Endothelial cell of umbilical vein (primary cell): ENCODE measurements at regions of chr1 and their contacts with region 1.

Region 1: DNA sequence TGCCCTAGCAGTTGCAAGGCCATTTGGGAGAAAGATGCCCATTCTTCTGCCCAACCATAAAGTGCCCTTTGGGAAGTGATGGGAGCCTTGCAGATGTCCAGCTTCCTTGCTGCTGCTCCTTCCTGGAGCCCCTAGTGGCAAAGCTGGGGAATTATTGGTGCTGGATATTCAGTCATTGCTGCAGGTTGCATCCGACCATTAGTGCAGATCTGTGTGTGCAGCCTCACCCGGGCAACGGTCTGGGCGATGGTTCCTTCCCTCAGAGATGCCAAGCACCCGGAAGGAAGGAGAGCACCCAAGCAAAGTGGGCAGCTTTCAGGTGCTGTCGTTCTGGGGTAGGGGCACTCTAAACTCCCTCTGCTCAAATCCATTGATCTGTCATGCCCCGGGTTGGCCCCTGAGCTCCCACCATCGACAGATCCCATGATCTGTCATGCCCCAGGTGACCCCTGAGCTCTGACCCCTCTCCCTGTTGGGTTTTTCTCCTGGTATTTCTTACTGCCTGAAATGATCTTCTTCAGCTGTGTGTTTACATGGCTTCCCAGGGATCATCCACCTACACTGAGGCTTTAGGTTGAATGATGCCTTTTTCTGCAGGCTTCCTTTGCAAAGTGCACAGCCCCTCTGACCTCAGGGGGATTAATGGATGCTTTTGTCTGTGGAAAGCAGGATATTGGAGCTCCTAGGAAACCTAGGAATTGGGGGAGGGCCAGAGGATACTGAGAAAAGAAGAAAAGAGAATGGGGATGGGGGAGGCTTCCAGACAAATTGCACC is 467.5 kb downstream of the PTPRU start:
- DNase-seq: peak; percentile 39
- H3K4me3 ChIP-seq: no peak overlapping the region
- H3K27ac ChIP-seq: no peak overlapping the region
- H3K4me1 ChIP-seq: peaks cover 11% of the 10 kb centered on the region
- H3K27me3 ChIP-seq: peaks cover 10 to 16% of the 10 kb centered on the region in 2 experiments
- CTCF ChIP-seq: peak; percentile 68 to 75
- POLR2A ChIP-seq: no peak

Region 2: DNA sequence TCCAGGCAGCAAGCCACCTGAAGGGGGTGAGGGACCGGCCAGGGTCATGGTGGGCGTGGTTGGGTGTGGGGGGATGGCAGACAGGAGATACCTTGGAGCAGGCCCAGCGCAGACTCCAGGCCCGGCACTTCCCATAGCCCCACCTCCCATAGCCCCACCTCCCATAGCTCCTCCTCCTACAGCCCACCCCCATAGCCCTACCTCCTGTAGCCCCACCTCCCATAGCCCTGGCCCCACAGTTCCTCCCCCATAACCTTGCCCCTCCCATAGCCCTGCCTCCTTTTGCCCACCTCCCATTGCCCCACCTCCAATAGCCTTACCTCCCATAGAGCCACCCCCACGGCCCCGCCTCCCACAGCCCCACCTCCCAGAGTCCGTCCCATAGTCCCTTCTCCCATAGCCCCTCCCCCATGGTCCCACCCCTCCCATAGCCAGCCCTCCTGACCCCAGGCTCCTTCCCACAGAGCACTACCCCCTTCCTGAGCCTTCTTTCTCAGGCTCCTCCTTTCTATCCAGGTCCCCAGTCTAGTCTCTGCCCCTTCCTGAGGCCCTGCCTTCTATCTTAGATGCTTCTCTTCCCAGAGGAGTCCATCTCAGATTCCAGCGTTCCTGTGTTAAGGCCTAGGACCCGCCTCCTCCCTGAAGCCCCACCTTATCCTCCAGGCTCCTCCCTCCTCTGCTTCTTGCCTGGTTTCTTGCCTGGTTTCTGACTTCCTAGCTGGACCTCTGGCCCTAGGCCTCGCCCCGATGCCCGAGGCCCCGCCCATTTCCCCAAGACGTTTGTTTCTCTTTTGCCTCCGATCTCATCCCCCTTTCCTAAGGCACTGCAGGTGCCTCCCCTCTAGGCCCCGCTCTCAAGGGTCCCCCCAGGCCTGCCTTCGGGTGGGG is 420.6 kb before region 1 on chr1:
- CTCF ChIA-PET with region 1: no interaction called
- POLR2A ChIA-PET with region 1: no interaction called
- dilution Hi-C with region 1: no loop called
- intact Hi-C with region 1: no loop called
- DNase-seq: peak; percentile 22
- H3K4me3 ChIP-seq: no peak overlapping the region
- H3K27ac ChIP-seq: no peak overlapping the region
- H3K4me1 ChIP-seq: no peaks in the 10 kb centered on the region
- H3K27me3 ChIP-seq: no peaks in the 10 kb centered on the region
- CTCF ChIP-seq: no peak
- POLR2A ChIP-seq: no peak

Region 3: DNA sequence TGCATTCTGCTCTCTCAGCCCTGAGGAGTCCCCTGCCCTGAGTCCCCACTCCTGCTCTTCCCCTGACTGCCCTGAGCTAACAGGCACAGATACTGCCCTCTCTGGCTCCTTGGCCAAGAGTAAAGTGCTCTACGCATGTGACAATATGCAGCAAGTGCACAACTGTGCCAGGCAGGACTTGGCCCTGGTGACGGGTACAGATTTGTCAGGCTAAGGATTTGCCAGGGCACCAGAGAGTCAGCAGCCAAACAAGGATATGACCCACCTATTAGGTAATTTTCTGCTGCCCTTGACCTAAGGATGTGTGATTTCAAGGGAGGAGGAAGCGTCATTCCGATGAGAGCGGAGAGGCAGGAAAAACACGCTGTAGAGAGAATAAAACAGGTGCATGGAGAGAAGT is 128.5 kb before region 1 on chr1:
- CTCF ChIA-PET with region 1: no interaction called
- POLR2A ChIA-PET with region 1: no interaction called
- dilution Hi-C with region 1: no loop called
- intact Hi-C with region 1: no loop called
- DNase-seq: no peak
- H3K4me3 ChIP-seq: no peak overlapping the region
- H3K27ac ChIP-seq: no peak overlapping the region
- H3K4me1 ChIP-seq: no peaks in the 10 kb centered on the region
- H3K27me3 ChIP-seq: no peaks in the 10 kb centered on the region
- CTCF ChIP-seq: no peak
- POLR2A ChIP-seq: no peak

Region 4: DNA sequence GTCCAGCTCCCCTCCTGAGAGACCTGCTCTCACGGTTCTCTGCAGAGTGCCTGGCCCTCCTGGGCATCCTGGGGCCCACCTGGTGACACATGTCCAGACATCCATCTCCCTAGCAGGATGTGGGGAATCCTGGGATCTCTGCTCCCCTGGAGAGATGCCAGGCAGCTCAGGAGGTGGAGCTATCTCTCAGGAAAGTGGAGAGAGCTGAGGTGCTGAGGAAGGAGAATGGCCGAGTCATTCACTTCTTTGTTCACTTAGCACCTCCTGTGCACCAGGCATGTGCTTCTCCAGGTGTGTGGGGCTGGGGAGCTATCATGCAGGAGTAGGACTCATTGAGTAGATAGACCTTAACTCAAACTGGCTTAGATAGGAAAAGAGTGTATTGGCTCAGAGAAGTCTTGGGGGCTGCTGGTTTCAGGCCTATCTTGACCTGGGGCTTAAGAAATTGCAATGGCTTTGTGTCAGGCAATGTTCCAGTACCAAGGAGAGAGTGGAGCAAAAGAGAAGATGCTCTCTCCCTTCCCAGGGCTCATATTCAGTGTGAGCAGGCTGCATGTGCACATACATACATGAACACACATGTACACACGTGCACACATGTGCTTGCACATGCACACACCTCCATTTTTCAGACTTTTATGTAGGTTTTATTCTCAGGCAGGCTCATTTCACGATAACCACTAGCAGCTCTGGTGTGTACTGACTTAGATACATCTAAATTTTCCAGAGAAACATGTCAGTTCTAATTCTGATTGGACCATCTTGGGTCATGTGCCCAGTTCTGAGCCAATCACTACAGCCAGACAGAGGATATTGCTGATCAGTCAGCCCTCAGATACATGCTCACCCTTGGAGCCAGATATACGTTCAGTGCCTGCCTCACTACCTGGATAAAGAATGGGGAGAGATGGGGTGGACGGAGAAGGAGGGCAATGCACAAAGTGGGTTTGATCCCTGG is 29.8 kb before region 1 on chr1:
- CTCF ChIA-PET with region 1: interaction called, 10 read pairs
- POLR2A ChIA-PET with region 1: no interaction called
- dilution Hi-C with region 1: no loop called
- intact Hi-C with region 1: no loop called
- DNase-seq: no peak
- H3K4me3 ChIP-seq: no peak overlapping the region
- H3K27ac ChIP-seq: no peak overlapping the region
- H3K4me1 ChIP-seq: no peaks in the 10 kb centered on the region
- H3K27me3 ChIP-seq: no peaks in the 10 kb centered on the region
- CTCF ChIP-seq: no peak
- POLR2A ChIP-seq: no peak

Region 5: GRCh38 chr1:29688471-29689365 is 15.1 kb before region 1 on chr1:
- CTCF ChIA-PET with region 1: interaction called, 71 read pairs
- POLR2A ChIA-PET with region 1: no interaction called
- dilution Hi-C with region 1: no loop called
- intact Hi-C with region 1: no loop called
- DNase-seq: peak; percentile 56
- H3K4me3 ChIP-seq: no peak overlapping the region
- H3K27ac ChIP-seq: peak overlapping the region; percentile 1
- H3K4me1 ChIP-seq: peaks cover 13% of the 10 kb centered on the region
- H3K27me3 ChIP-seq: peaks cover 4 to 6% of the 10 kb centered on the region in 2 experiments
- CTCF ChIP-seq: no peak
- POLR2A ChIP-seq: no peak